A549 (cell line): ENCODE measurements at regions of chr17 and their contacts with region 1.

Region 1: DNA sequence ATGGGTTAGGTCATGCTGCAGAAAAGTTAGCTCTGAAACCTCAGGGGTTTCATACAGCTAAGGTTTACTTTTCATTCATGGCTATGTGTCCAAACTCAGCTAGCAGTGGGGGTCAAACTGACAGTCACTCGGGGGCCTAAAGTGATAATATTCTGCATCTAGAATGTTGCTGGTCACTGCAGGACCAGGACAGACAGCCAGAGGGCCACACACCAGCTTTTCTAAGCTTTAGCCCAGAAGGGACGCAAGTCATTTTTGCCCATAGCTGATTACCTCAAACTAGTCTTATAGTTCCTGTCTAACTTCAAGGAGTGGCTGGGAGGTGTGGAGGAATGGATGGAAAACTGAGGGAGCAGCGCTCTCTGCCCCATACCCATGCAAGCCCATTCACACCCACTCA is 163.0 kb upstream of the NLRP1 start:
- DNase-seq: no peak
- ATAC-seq: no peak
- H3K4me3 ChIP-seq: no peak overlapping the region
- H3K27ac ChIP-seq: no peak overlapping the region
- H3K4me1 ChIP-seq: no peaks in the 10 kb centered on the region
- CTCF ChIP-seq: no peak
- EP300 ChIP-seq: no peak
- POLR2A ChIP-seq: no peak
- RAD21 ChIP-seq: no peak

Region 2: DNA sequence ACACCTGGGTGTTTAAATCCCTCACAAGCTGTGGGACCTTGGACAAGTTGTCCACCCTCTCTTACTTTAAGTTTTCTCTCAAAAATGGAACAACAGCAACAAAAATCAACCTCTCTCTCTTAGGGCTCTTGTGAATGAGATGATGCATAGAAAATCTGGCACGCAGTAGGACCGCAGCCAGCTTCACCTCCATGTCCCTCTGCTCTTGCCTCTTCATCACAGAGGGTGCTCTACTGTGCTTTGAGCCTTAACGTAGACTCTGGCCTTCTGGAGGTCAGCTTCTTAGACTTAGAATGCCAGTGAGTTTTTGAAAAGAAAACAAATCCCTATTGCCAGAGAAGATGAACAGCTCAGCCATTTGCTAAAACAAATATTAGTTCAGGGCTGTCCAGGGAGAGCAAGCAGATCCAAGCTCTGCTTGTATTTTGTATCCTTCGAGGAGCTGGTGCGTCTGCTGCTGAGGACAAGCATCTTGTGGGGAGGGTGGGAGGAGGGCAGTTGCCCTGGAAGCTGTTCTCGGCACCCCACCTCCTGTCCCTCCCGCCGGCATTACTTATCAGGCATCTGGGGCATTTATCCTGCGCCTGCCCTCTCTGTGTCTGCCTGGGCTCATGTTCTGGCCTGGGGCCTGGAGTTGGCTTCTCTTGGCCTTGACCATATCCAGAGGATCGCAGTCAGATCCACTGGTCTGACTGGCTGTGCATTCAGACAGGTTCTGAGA is 10.0 kb after region 1 on chr17:
- CTCF ChIA-PET with region 1: interaction called, 10 read pairs
- POLR2A ChIA-PET with region 1: no interaction called
- DNase-seq: no peak
- ATAC-seq: no peak
- H3K4me3 ChIP-seq: no peak overlapping the region
- H3K27ac ChIP-seq: no peak overlapping the region
- H3K4me1 ChIP-seq: no peaks in the 10 kb centered on the region
- CTCF ChIP-seq: no peak
- EP300 ChIP-seq: no peak
- POLR2A ChIP-seq: no peak
- RAD21 ChIP-seq: no peak